ENCODE measurements at regions of chr13 and their contacts with region 1.

Region 1: DNA sequence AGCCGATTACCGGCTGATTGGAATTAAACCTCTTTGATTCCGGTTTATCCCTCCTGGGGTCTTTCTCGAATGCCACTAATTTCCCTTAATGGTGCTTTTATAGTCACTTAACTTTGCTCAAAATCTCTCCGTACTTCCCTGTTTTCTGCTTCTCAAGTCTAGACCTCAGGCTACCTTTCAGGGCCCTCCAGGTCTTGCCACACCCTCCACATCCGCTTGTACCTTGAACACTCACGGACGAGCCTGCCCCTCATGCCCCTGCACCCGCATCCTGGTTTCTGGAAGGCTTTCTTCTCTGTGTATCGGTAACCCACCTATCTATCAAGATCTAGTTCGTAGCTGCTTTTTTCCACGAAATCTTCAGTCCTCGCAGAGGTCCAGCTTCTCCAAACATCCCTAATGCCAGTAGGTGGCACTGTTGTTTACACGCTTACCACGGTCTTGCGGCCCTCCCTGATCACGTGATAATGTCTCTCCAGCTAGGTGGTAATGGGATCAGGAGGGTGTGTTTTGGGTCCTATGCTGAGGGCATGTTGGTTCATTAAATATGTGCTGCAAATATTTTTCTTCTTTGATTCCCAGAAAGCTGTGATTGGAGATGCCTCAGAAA is 13.8 kb downstream of the ATP12A start:
- DNase-seq: no peak

Region 2: DNA sequence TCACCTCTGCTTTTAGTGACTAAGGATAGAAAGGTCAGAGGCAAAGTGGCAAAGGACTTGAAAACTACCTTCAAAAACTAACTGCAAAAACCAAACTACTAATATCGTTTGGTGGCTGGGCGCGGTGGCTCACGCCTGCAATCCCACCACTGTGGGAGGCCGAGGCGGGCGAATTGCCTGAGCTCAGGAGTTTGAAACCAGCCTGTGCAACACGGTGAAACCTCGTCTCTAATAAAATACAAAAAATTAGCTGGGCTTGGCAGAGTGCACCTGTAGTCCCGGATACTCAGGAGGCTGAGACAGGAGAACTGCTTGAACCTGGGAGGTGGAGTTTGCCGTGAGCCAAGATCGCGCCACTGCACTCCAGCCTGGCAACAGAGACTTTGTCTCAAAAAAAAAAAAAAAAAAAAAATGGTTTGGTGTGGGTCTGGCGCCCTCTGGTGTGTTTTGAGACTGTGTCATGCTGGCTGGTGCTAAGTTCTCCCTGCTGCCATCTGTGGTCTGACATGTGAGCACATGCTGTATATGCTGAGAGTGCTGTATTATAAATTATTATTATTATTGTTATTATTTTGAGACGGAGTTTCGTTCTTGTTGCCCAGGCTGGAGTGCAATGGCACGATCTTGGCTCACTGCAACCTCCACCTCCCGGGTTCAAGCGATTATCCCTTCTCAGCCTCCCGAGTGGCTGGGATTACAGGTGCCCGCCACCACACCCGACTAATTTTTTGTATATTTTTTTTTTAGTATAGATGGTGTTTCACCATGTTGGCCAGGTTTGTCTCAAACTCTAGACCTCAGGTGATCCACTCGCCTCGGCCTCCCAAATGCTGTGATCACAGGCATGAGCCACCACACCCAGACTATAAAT is 34.0 kb after region 1 on chr13:
- intact Hi-C with region 1: loop called (anchors 2 kb)
- DNase-seq: no peak